Activated T-helper 1 cell treated with anti-CD3 and anti-CD28 coated beads, Interleukin-12 subunit alpha, Interleukin-12 subunit beta, Interleukin-2, Interleukin-4 antibody, amounts not matched to agents 30 ng/mL and 10 ng/mL and 1 ng/mL, durations not matched to agents 14 hours and 24 hours and 36 hours (primary cell): ENCODE measurements at regions of chr2 and their contacts with region 1.

Region 1: DNA sequence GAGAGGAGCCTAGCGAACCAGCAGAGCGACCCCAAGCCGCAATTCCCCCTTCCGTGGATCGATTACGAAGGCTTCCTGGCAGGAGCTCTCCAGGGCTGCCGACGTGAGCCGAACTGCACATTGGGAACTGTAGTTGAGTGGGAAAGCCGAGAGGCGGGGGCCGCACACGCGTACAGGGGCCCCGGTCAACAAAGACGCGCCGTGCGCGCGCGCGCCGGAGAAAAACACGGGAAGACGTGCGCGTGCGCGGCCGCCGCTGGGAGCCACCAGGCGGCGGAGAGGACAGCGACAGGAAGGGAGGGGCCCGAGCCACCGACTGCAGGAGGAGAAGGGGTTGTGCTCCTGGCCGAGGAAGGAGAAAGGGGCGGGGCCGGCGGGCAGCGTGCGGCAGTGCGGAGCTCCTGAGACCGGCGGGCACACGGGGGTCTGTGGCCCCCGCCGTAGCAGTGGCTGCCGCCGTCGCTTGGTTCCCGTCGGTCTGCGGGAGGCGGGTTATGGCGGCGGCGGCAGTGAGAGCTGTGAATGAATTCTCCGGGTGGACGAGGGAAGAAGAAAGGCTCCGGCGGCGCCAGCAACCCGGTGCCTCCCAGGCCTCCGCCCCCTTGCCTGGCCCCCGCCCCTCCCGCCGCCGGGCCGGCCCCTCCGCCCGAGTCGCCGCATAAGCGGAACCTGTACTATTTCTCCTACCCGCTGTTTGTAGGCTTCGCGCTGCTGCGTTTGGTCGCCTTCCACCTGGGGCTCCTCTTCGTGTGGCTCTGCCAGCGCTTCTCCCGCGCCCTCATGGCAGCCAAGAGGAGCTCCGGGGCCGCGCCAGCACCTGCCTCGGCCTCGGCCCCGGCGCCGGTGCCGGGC is at the start of gene SPAST:
- DNase-seq: peak; percentile 96
- H3K4me3 Mint-ChIP-seq: peak within 1 kb of the TSS; percentile 97
- H3K27ac Mint-ChIP-seq: peak within 1 kb of the TSS; percentile 95
- H3K4me1 Mint-ChIP-seq: peaks cover 31% of the 10 kb centered on the region
- H3K27me3 Mint-ChIP-seq: peaks cover 6% of the 10 kb centered on the region
- total RNA-seq, gene SPAST: 18.9 and 21.0 TPM in 2 replicates

Region 2: DNA sequence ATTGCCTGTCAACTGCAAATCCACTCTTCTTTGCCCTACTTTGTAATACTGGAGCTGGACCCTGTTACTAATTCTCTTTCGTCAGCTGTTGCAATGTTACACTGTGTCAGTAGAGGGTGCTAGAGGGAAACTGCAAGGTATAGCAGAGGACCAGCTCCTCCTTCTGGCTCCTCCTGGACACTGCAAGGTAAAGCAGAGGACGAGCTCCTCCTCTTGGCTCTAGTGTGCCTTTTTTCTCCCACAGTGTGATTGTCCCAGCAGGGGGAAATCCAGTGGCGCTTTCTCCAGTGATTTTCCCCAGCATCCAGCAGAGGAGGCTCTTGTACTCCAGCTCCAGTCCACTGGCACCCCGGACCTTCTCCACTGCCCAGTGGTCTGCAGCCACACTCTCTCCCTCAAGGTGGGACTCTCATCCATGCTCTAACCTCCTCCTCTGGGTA is 1351.9 kb before region 1 on chr2:
- intact Hi-C with region 1: loop called (anchors 5 kb)
- DNase-seq: peak; percentile 80
- H3K4me3 Mint-ChIP-seq: no peak overlapping the region
- H3K27ac Mint-ChIP-seq: no peak overlapping the region
- H3K4me1 Mint-ChIP-seq: peaks cover 16% of the 10 kb centered on the region
- H3K27me3 Mint-ChIP-seq: no peaks in the 10 kb centered on the region

Region 3: GRCh38 chr2:31945572-31945935 is 118.0 kb before region 1 on chr2:
- intact Hi-C with region 1: no loop called
- DNase-seq: no peak
- H3K4me3 Mint-ChIP-seq: no peak overlapping the region
- H3K27ac Mint-ChIP-seq: peak overlapping the region; percentile 8
- H3K4me1 Mint-ChIP-seq: peaks cover 35% of the 10 kb centered on the region
- H3K27me3 Mint-ChIP-seq: no peaks in the 10 kb centered on the region

Region 4: GRCh38 chr2:31957354-31958139 is 106.0 kb before region 1 on chr2:
- intact Hi-C with region 1: loop called (anchors 5 kb)
- DNase-seq: no peak
- H3K4me3 Mint-ChIP-seq: no peak overlapping the region
- H3K27ac Mint-ChIP-seq: peak overlapping the region; percentile 19
- H3K4me1 Mint-ChIP-seq: peaks cover 43% of the 10 kb centered on the region
- H3K27me3 Mint-ChIP-seq: no peaks in the 10 kb centered on the region

Region 5: DNA sequence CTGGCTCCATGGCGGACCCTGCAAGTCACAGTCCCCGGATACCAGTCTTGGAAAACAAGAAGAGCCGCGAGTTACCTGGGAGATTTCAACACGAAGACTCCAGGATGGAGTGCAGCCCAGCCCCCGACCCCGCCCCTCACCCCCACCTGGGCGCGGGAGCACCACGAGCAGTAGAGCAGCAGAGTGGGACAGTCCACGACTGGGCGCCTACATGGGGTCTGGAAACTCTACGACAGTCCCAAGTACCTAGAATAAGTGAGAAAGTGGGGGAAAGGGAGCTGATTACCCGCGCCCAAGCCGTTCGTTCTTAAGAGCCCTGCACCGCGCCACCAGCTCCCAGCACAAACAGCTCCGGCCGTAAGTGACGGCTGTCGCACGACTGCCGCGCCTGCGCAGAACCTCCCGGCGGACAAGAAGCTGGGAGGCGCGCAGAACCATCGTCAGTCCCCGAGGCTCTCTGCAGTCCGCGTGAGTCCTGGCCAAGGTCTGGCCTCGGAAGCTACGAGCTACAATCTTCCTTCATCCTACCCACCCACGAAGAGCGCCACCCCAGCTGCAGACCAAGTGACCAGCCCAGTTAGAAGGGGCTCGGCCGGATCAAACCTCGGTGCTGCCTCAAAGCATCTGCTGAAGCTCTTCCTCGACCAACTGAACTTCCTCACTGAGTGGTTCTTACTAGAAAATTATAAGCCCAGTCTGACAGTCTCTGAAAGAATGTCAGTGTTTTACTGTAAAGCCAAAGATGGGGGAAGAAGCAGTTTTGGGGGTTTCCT is 23.9 kb before region 1 on chr2 and contains the start of gene DPY30:
- intact Hi-C with region 1: loop called (anchors 1 kb)
- DNase-seq: peak; percentile 86
- H3K4me3 Mint-ChIP-seq: peak within 1 kb of the TSS; percentile 93
- H3K27ac Mint-ChIP-seq: peak within 1 kb of the TSS; percentile 93
- H3K4me1 Mint-ChIP-seq: peaks cover 17% of the 10 kb centered on the region
- H3K27me3 Mint-ChIP-seq: peaks cover 1% of the 10 kb centered on the region
- total RNA-seq, gene DPY30: 64.6 and 72.5 TPM in 2 replicates

Region 6: DNA sequence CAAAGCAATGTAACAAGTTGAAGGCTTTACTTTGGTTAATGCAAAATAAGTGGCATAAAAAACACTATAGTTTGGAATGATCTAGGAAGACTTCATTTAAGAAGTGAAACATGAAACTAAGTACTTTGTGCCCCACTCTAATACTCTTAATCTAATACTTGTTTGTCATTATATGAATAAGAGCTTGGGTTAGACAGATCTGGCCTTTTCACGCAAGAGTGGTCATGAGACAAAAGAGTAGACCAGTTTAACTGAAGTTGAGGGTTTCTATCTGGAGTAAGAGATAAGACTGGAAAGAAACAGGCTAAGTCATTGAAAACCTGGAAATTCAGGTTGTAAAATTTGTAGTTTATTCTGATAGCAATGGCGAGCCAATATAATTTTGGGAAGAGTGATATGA is 105.0 kb after region 1 on chr2:
- intact Hi-C with region 1: loop called (anchors 1 kb)
- DNase-seq: no peak
- H3K4me3 Mint-ChIP-seq: no peak overlapping the region
- H3K27ac Mint-ChIP-seq: no peak overlapping the region
- H3K4me1 Mint-ChIP-seq: peaks cover 44% of the 10 kb centered on the region
- H3K27me3 Mint-ChIP-seq: no peaks in the 10 kb centered on the region

Region 7: DNA sequence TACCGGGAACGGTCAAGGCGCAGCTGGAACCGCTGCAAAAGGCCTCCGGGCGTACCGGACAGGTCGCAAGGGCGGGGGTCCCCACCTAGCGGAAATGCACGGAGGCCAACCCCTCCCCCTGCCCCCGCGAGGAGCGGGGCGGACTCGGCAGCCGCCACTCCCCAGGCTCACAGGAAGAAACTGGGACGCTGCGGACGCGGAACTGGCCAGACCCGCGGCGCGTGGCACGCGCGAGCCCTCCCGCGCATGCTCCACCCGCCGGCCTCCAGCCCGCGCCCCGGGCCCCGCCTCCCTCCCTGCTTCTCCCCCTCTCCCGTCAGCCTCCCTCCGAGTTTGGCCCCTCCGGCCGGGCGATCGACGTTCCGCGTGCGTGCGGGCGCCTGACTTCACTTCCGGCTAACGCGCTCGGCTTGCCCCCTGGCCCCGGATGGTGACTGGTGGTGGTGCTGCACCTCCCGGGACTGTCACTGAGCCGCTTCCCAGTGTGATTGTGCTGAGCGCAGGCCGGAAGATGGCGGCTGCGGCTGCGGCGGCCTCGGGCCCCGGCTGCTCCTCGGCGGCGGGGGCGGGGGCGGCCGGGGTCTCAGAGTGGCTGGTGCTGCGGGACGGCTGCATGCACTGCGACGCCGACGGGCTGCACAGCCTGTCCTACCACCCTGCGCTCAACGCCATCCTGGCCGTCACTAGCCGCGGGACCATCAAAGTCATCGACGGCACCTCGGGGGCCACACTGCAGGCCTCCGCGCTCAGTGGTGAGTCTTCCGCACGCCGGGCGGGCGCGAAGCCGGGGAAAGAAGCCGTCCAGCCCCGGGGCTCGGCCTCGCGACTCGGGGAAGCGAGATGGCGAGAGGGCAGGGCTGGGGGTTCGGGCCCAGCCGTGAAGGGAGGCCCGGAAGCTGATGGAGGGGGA is 293.5 kb after region 1 on chr2 and contains the start of gene BIRC6:
- intact Hi-C with region 1: loop called (anchors 1 kb)
- DNase-seq: peak; percentile 92
- H3K4me3 Mint-ChIP-seq: peak within 1 kb of the TSS; percentile 89
- H3K27ac Mint-ChIP-seq: peak within 1 kb of the TSS; percentile 96
- H3K4me1 Mint-ChIP-seq: peaks cover 40% of the 10 kb centered on the region
- H3K27me3 Mint-ChIP-seq: no peaks in the 10 kb centered on the region
- total RNA-seq, gene BIRC6: 112 and 123 TPM in 2 replicates